ENCODE measurements at regions of chr10 and their contacts with region 1.

Region 1: DNA sequence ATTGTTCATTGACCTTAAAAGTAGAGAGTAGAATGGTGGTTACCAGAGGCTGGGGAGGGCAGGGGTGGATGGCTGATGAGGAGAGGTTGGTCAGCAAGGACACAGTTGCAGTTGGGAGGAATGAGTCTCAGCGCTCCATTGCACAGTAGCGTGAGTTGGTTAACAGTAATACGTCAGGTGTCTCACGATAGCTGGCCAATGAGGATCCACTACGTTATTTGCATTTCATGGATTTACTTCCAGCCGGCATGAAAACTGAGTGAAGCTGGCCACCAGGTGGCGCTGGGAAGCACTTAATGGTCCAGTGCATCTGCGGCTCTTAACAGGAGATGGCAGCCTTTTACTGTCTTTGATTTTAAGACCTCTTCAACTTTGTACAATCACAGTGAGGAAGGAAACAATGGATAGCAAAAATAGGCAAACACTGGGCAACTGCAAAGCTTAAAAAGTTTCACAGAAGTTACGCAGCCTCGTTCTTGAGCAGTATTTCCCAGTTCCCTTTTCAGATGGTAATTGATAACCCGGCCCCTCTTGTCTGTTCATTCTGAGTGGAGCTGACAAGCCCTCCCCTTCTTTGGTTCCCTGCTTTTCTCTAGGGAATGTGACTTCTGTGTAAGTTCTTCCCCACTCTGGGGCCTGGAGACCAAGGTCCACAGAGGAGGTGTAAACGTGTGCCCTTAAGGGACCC is 23.7 kb downstream of the AKR1E2 start:
- DNase-seq: peak; percentile 44
- H3K4me3 ChIP-seq: no peak overlapping the region
- H3K27me3 ChIP-seq: no peaks in the 10 kb centered on the region
- CTCF ChIP-seq: peak; percentile 99

Region 2: GRCh38 chr10:4839401-4839800 is 10.3 kb before region 1 on chr10:
- CTCF ChIA-PET with region 1: interaction called, 45 read pairs
- POLR2A ChIA-PET with region 1: no interaction called
- DNase-seq: no peak
- H3K4me3 ChIP-seq: no peak overlapping the region
- H3K27me3 ChIP-seq: no peaks in the 10 kb centered on the region
- CTCF ChIP-seq: no peak

Region 3: GRCh38 chr10:4947635-4948596 is 98.2 kb after region 1 on chr10:
- CTCF ChIA-PET with region 1: interaction called, 26 read pairs
- POLR2A ChIA-PET with region 1: no interaction called
- DNase-seq: peak; percentile 88
- H3K4me3 ChIP-seq: no peak overlapping the region
- H3K27me3 ChIP-seq: no peaks in the 10 kb centered on the region
- CTCF ChIP-seq: no peak

Region 4: GRCh38 chr10:5105626-5106025 is 255.9 kb after region 1 on chr10:
- CTCF ChIA-PET with region 1: interaction called, 172 read pairs
- POLR2A ChIA-PET with region 1: no interaction called
- DNase-seq: no peak
- H3K4me3 ChIP-seq: no peak overlapping the region
- H3K27me3 ChIP-seq: no peaks in the 10 kb centered on the region
- CTCF ChIP-seq: no peak

Region 5: DNA sequence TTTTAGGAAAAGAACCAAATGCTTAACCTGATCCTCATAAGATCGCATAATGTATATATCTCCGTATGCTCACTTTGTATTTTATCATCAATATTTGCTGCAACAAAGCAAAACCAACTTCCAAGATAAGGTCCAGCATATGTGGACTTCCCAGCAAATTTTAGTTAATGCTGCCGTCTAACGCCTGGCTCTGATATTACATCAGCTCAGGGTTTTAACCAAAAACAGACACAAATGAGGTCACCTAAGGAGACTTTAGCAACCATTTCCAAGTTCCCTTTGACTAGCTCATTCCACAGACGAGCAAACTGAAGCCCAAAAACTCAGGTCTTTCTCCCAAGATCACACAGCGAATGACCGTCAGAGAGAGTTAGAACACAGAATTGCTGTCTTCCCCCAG is 455.7 kb after region 1 on chr10:
- CTCF ChIA-PET with region 1: interaction called, 51 read pairs
- POLR2A ChIA-PET with region 1: no interaction called
- DNase-seq: peak; percentile 35
- H3K4me3 ChIP-seq: no peak overlapping the region
- H3K27me3 ChIP-seq: no peaks in the 10 kb centered on the region
- CTCF ChIP-seq: peak; percentile 62

Region 6: GRCh38 chr10:5434017-5434753 is 584.5 kb after region 1 on chr10:
- CTCF ChIA-PET with region 1: interaction called, 22 read pairs
- POLR2A ChIA-PET with region 1: no interaction called
- DNase-seq: no peak
- H3K4me3 ChIP-seq: no peak overlapping the region
- H3K27me3 ChIP-seq: no peaks in the 10 kb centered on the region
- CTCF ChIP-seq: peak; percentile 73